A549 (cell line): ENCODE measurements at regions of chr11 and their contacts with region 1.

Region 1: DNA sequence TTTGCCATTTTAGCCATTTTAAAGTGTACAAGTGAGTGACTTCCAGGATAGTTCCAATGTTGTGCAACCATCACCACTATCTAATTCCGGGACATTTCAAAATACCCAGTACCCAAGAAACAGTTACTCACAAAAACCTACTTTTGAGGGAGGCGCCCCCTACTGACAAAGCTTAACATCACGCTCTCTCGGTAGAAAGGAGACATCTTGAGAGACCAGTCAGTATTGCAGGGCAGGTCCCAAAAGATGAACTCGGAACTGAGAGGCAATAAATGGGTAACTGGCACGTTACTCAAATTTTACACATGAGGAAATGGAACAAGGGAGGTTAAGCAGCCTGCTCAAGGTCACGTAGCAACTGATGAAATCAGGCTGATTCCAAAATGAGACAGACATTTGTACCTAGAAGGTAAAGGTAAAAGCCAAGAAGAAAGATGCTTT is 50.0 kb upstream of the POU2AF1 start:
- DNase-seq: peak in 1 of 2 experiments; percentile 63
- ATAC-seq: peak in 1 of 2 experiments; percentile 72; a peak in 3 of 6 replicates
- H3K4me3 ChIP-seq: no peak overlapping the region
- H3K27ac ChIP-seq: no peak overlapping the region
- H3K4me1 ChIP-seq: no peaks in the 10 kb centered on the region
- CTCF ChIP-seq: peak; percentile 54
- EP300 ChIP-seq: no peak
- POLR2A ChIP-seq: no peak
- RAD21 ChIP-seq: peak; percentile 27 to 31; a peak in 4 of 5 replicates

Region 2: GRCh38 chr11:111299101-111300026 is 129.7 kb before region 1 on chr11:
- CTCF ChIA-PET with region 1: interaction called, 13 read pairs
- POLR2A ChIA-PET with region 1: no interaction called
- DNase-seq: peak; percentile 58 to 60
- ATAC-seq: peak; percentile 95 to 97
- H3K4me3 ChIP-seq: peak overlapping the region; percentile 96
- H3K27ac ChIP-seq: peak overlapping the region; percentile 92 to 97
- H3K4me1 ChIP-seq: peaks cover 17% of the 10 kb centered on the region; the same call in 2 of the 3 replicates
- CTCF ChIP-seq: peak; percentile 37; the same call in 2 of the 3 replicates
- EP300 ChIP-seq: no peak
- POLR2A ChIP-seq: peak; percentile 25; the same call in 1 of the 2 replicates
- RAD21 ChIP-seq: peak; percentile 39 to 56

Region 3: GRCh38 chr11:111441443-111441842 is 12.4 kb after region 1 on chr11:
- CTCF ChIA-PET with region 1: interaction called, 23 read pairs
- POLR2A ChIA-PET with region 1: no interaction called
- DNase-seq: peak in 1 of 2 experiments; percentile 42
- ATAC-seq: peak; percentile 12 to 50; a peak in 4 of 6 replicates
- H3K4me3 ChIP-seq: no peak overlapping the region
- H3K27ac ChIP-seq: no peak overlapping the region
- H3K4me1 ChIP-seq: no peaks in the 10 kb centered on the region
- CTCF ChIP-seq: no peak
- EP300 ChIP-seq: no peak
- POLR2A ChIP-seq: no peak
- RAD21 ChIP-seq: no peak

Region 4: GRCh38 chr11:111659201-111660115 is 230.4 kb after region 1 on chr11:
- CTCF ChIA-PET with region 1: no interaction called
- POLR2A ChIA-PET with region 1: no interaction called
- DNase-seq: no peak
- ATAC-seq: no peak
- H3K4me3 ChIP-seq: no peak overlapping the region
- H3K27ac ChIP-seq: no peak overlapping the region
- H3K4me1 ChIP-seq: no peaks in the 10 kb centered on the region
- CTCF ChIP-seq: no peak
- EP300 ChIP-seq: no peak
- POLR2A ChIP-seq: no peak
- RAD21 ChIP-seq: no peak